A549 (cell line): ENCODE measurements at regions of chr3 and their contacts with region 1.

Region 1: DNA sequence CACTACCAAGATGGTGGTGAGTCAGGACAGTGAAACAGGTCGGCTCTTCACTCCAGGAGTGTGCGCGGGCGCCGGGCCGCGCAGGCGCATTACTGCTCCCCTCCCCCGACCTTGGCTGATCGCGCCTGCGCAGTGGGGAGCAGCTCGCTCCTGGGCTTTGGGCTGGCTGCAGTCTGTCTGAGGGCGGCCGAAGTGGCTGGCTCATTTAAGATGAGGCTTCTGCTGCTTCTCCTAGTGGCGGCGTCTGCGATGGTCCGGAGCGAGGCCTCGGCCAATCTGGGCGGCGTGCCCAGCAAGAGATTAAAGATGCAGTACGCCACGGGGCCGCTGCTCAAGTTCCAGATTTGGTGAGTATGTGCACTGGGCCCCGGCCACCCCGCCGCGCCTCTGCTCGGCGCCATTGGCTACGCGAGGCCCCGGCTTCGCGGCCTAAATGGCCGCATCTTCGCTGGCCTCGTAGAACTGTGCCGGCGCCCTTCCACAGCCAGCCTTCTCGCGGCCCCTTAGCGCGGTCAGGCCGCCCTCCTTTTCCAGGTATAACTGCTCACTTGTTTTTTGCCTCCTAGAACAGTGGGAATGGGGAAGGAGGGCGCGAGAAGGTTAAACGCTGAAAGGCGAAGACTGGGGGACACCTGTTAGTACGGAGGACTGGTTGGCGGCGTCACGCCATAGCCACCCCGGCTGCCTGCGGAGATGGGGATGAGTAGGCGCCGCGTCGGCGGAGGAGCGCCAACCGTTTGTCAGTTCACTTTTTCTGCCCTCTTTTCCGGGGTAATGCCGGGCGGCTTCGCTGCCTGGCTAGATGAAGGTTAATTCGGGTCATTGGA is at the start of gene SELENOT:
- DNase-seq: peak; percentile 94 to 97
- ATAC-seq: peak; percentile 94 to 97
- H3K4me3 ChIP-seq: peak within 1 kb of the TSS; percentile 70
- H3K27ac ChIP-seq: peak within 1 kb of the TSS; percentile 88 to 92
- H3K4me1 ChIP-seq: peaks cover 23% of the 10 kb centered on the region; the same call in 2 of the 3 replicates
- CTCF ChIP-seq: no peak
- EP300 ChIP-seq: no peak
- POLR2A ChIP-seq: peak; percentile 96
- RAD21 ChIP-seq: no peak
- polyA plus RNA-seq, gene SELENOT: 536 and 846 TPM in 2 replicates

Region 2: GRCh38 chr3:150035301-150035779 is 568.0 kb before region 1 on chr3:
- CTCF ChIA-PET with region 1: no interaction called
- POLR2A ChIA-PET with region 1: no interaction called
- DNase-seq: no peak
- ATAC-seq: no peak
- H3K4me3 ChIP-seq: no peak overlapping the region
- H3K27ac ChIP-seq: no peak overlapping the region
- H3K4me1 ChIP-seq: no peaks in the 10 kb centered on the region
- CTCF ChIP-seq: no peak
- EP300 ChIP-seq: no peak
- POLR2A ChIP-seq: no peak
- RAD21 ChIP-seq: no peak

Region 3: DNA sequence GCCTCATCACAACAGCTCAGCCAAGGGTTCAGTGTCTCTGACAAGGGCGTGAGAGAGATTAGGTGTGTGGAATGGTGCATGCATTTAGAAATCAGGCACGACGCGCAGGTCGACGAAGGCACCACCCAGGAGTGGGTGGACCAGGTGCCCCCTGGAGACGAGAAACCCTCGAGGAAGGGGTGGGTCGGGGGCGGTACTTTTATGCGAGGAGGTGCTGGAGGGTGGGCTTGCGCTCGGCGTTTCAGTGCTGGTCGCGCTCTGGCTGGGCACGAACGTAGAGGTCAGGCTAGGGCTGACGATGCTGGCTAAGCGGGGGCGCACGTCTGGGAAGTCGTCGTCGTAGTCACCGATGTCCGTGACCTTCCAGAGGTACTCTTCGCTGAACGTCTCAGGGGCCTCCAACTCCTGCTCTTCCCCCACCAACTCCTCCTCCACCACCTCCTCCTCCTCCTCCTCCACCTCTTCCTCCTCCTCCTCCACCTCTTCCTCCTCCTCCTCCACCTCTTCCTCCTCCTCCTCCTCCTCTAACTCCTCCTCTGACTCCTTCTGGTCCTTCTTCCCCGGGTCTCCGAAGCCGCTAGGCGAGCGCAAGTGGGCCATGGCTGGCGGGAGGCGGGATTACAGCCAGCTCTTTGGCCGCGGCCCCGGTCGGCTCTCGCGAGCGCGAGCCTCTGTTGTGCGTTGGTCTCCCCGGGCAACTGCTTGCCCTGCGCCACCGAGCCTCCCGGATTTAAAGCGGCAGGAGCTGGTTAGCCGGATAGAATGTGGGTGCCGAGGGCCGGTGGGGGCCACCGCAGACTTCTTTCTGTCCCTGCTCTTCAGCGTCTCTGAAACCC is 100.2 kb after region 1 on chr3 and contains the start of gene ERICH6:
- CTCF ChIA-PET with region 1: interaction called, 3 read pairs
- POLR2A ChIA-PET with region 1: interaction called, 12 read pairs
- DNase-seq: peak; percentile 91 to 92
- ATAC-seq: peak; percentile 98 to 99
- H3K4me3 ChIP-seq: peak within 1 kb of the TSS; percentile 65
- H3K27ac ChIP-seq: peak within 1 kb of the TSS; percentile 79 to 91
- H3K4me1 ChIP-seq: peaks cover 3% of the 10 kb centered on the region; the same call in 1 of the 3 replicates
- CTCF ChIP-seq: no peak
- EP300 ChIP-seq: no peak
- POLR2A ChIP-seq: peak; percentile 29; the same call in 1 of the 2 replicates
- RAD21 ChIP-seq: no peak
- polyA plus RNA-seq, gene ERICH6: 0.06 and 0.07 TPM in 2 replicates